Activated CD4-positive, alpha-beta T cell treated with anti-CD3 and anti-CD28 coated beads for 36 hours (primary cell): ENCODE measurements at regions of chrX and their contacts with region 1.

Region 1: GRCh38 chrX:76279000-76279399 is 106.1 kb downstream of the PBDC1 start:
- DNase-seq: peak; percentile 49
- ATAC-seq: no peak
- H3K4me3 Mint-ChIP-seq: no peak overlapping the region
- H3K27ac Mint-ChIP-seq: no peak overlapping the region
- H3K4me1 Mint-ChIP-seq: no peaks in the 10 kb centered on the region
- H3K27me3 Mint-ChIP-seq: peaks cover 3% of the 10 kb centered on the region

Region 2: GRCh38 chrX:76454456-76454927 is 175.5 kb after region 1 on chrX:
- CTCF ChIA-PET with region 1: interaction called, 48 read pairs
- POLR2A ChIA-PET with region 1: no interaction called
- intact Hi-C with region 1: loop called (anchors 1 kb)
- DNase-seq: no peak
- ATAC-seq: peak; percentile 47
- H3K4me3 Mint-ChIP-seq: no peak overlapping the region
- H3K27ac Mint-ChIP-seq: no peak overlapping the region
- H3K4me1 Mint-ChIP-seq: no peaks in the 10 kb centered on the region
- H3K27me3 Mint-ChIP-seq: no peaks in the 10 kb centered on the region

Region 3: GRCh38 chrX:78029663-78030062 is 1750.7 kb after region 1 on chrX:
- CTCF ChIA-PET with region 1: no interaction called
- POLR2A ChIA-PET with region 1: no interaction called
- intact Hi-C with region 1: loop called in 1 of 2 experiments (anchors 10 kb)
- DNase-seq: peak; percentile 33
- ATAC-seq: no peak
- H3K4me3 Mint-ChIP-seq: no peak overlapping the region
- H3K27ac Mint-ChIP-seq: no peak overlapping the region
- H3K4me1 Mint-ChIP-seq: peaks cover under 1% of the 10 kb centered on the region
- H3K27me3 Mint-ChIP-seq: no peaks in the 10 kb centered on the region